ENCODE measurements at regions of chr4 and their contacts with region 1.

Region 1: GRCh38 chr4:100093091-100093866 is 97.0 kb downstream of the DDIT4L start:
- DNase-seq: peak; percentile 51 to 83
- ATAC-seq: peak; percentile 77 to 97 (median 89)
- H3K4me3 ChIP-seq: no peak overlapping the region
- H3K27ac ChIP-seq: peak overlapping the region in 6 of 10 donors; percentile 3 to 34 (median 16)
- H3K4me1 ChIP-seq: peaks cover 5 to 32% (median 14%) of the 10 kb centered on the region in 9 donors
- H3K27me3 ChIP-seq: no peaks in the 10 kb centered on the region
- CTCF ChIP-seq: peak; percentile 65 to 91 (median 85)

Region 2: GRCh38 chr4:99998062-99998867 is 95.0 kb before region 1 on chr4:
- intact Hi-C with region 1: loop called in 1 of 10 experiments (anchors 10 kb)
- DNase-seq: no peak
- ATAC-seq: no peak
- H3K4me3 ChIP-seq: no peak overlapping the region
- H3K27ac ChIP-seq: no peak overlapping the region
- H3K4me1 ChIP-seq: no peaks in the 10 kb centered on the region
- H3K27me3 ChIP-seq: no peaks in the 10 kb centered on the region
- CTCF ChIP-seq: peak in 7 of 9 donors; percentile 21 to 53 (median 37)

Region 3: DNA sequence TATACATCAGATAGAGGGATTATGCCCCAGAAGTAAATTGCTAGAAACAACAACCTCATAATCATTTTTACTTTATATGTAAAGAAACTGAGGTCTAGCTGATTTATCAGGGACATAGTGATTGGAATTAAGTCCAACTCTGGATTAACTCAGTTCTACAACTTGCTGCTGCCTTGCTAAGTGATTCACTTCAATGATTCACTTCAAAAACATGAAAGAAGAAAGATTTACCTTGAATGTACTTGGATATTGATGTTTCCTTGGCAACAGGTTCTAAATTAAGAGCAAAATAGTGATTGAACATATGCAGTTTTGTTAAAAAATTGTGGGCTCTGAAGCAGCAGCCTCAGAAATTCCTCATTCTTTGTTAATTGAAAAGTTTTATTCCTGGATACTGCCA is 43.4 kb before region 1 on chr4:
- intact Hi-C with region 1: no loop called
- DNase-seq: no peak
- ATAC-seq: no peak
- H3K4me3 ChIP-seq: no peak overlapping the region
- H3K27ac ChIP-seq: no peak overlapping the region
- H3K4me1 ChIP-seq: no peaks in the 10 kb centered on the region
- H3K27me3 ChIP-seq: no peaks in the 10 kb centered on the region
- CTCF ChIP-seq: no peak

Region 4: DNA sequence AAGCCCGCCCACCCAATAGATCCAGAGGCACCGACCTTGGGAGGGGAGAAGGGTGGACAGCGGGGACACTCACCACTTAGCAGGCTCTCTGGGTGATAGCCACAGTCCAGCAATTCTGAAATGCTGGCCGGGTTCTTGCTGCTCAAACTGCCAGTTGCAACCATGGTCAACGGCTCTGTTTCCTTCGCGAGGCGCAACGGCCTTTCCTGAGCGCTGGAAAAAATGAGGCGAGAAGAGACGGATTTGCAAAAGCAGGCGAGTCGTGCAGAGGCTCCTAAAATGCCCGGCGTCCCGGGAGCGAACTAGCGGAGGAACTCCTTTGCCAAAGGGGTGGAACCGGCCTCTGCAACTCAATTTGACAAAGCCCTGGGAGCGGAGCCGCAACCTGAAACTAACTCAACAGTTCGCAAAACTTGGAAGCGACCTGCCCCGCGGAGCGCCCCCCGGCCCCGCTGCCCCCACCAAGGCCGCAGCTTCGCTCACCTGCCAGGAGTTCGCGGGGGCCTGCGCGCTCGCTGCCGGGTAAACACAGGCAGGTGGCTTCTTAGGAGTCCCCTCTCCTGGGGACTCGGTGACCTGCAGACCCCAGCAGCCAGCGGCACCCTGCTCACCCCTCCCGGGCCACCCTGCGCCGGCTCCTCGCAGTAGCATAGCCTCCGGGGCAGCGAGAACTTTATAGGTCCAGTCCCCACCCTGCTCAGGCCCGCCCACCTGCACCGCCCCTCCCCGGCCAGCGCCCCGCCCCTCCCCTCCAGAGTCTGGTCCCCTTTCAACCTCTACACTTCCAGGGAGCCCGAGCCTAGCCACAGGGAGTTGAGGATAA is 96.8 kb after region 1 on chr4 and contains the start of gene DDIT4L:
- intact Hi-C with region 1: loop called in 1 of 10 experiments (anchors 5 kb)
- DNase-seq: peak; percentile 28 to 45
- ATAC-seq: peak; percentile 71 to 88 (median 85)
- H3K4me3 ChIP-seq: peak within 1 kb of the TSS; percentile 57 to 89 (median 74)
- H3K27ac ChIP-seq: peak within 1 kb of the TSS in 5 of 10 donors; percentile 1 to 59 (median 29)
- H3K4me1 ChIP-seq: peaks cover 0 to 23% (median 16%) of the 10 kb centered on the region in 9 donors
- H3K27me3 ChIP-seq: peaks cover 0 to 37% (median 4%) of the 10 kb centered on the region in 7 donors
- CTCF ChIP-seq: no peak
- total RNA-seq, gene DDIT4L: 0.14 to 2.1 (median 0.65) TPM

Region 5: DNA sequence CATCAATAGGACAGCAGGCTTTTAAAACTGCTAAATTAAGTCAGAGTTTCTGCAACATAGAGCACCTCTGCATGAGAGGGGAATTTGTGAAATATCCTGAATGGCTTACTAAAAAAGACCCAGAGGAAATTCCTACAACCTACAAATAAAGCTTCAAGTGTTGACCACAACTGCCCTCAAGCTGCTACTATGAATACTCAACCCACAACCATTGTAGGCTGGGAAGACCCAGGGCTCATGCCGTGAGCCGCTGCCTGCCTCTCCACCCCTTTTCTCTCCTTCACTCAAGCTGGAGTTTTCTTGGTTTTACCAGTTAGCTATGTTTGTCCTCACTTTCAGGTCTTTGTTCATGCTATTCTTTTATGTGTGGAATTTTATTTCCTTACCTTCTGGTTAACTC is 272.9 kb after region 1 on chr4:
- intact Hi-C with region 1: no loop called
- DNase-seq: no peak
- ATAC-seq: no peak
- H3K4me3 ChIP-seq: no peak overlapping the region
- H3K27ac ChIP-seq: no peak overlapping the region
- H3K4me1 ChIP-seq: no peaks in the 10 kb centered on the region
- H3K27me3 ChIP-seq: no peaks in the 10 kb centered on the region
- CTCF ChIP-seq: no peak

Region 6: DNA sequence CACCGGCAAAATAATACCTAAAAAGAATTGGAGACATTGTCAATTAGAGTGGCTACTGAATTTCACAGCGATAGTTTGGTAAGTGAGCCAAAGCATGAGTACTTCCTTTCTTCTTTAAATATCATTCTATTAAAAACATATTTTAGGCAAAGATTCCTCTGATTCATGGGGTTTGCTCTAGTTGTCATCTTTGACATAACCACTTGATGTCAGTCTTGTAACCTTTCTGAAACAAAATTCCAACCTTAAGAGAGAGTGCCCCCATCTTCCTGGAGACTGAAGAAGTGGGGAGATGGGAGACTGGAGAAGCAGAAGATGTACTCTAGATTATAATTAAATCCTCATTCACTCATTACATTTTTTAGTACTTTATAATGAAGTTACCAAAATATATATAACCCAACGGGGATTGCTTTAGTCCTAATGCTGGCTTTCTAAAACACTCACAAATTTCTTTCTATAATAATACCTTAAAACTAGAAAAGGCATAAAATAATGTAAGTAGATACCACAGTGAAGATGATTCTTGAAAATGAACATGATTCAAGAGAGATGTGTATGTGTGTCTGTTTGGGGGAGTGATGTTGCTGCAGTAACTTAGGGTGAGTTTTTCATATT is 328.2 kb after region 1 on chr4:
- intact Hi-C with region 1: loop called in 1 of 10 experiments (anchors 10 kb)
- DNase-seq: no peak
- ATAC-seq: peak in 6 of 8 donors; percentile 43 to 81 (median 58)
- H3K4me3 ChIP-seq: peak overlapping the region in 3 of 10 donors; percentile 9 to 21 (median 10)
- H3K27ac ChIP-seq: peak overlapping the region in 5 of 10 donors; percentile 6 to 56 (median 37)
- H3K4me1 ChIP-seq: peaks cover 0 to 37% (median 8%) of the 10 kb centered on the region in 9 donors
- H3K27me3 ChIP-seq: no peaks in the 10 kb centered on the region
- CTCF ChIP-seq: peak; percentile 18 to 77 (median 57)

Region 7: DNA sequence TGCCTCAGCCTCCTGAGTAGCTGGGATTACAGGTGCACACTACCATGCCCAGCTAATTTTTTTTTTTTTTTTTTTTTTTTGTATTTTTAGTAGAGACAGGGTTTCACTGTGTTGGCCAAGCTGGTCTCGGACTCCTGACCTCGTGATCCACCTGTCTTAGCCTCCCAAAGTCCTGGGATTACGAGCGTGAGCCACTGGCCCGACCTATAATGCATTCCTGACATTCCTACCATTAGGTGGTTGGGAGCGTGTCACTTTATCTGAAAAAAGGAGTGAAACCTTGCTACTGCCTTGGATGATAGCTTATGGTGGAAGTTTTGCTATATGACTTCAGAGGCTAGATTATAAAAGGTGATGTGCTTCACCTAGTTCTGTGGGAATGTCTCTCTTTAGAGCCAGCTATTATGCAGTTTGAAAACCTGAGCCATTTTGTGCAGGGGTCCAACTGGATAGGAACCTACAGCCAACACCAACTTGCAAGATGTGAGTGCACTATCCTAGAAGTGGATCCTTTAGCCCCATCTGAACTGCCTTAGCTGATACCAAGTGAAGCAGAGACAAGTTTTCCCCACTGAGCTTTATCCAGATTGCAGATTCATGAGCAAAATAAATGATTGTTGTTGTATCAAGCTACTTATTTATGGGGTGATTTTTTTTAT is 454.4 kb after region 1 on chr4:
- intact Hi-C with region 1: no loop called
- DNase-seq: no peak
- ATAC-seq: no peak
- H3K4me3 ChIP-seq: no peak overlapping the region
- H3K27ac ChIP-seq: no peak overlapping the region
- H3K4me1 ChIP-seq: no peaks in the 10 kb centered on the region
- H3K27me3 ChIP-seq: no peaks in the 10 kb centered on the region
- CTCF ChIP-seq: no peak

Region 8: GRCh38 chr4:101724093-101724492 is 1630.8 kb after region 1 on chr4:
- intact Hi-C with region 1: loop called in 1 of 10 experiments (anchors 5 kb)
- DNase-seq: no peak
- ATAC-seq: peak in 1 of 8 donors; percentile 25
- H3K4me3 ChIP-seq: no peak overlapping the region
- H3K27ac ChIP-seq: no peak overlapping the region
- H3K4me1 ChIP-seq: no peaks in the 10 kb centered on the region
- H3K27me3 ChIP-seq: no peaks in the 10 kb centered on the region
- CTCF ChIP-seq: no peak

Region 9: DNA sequence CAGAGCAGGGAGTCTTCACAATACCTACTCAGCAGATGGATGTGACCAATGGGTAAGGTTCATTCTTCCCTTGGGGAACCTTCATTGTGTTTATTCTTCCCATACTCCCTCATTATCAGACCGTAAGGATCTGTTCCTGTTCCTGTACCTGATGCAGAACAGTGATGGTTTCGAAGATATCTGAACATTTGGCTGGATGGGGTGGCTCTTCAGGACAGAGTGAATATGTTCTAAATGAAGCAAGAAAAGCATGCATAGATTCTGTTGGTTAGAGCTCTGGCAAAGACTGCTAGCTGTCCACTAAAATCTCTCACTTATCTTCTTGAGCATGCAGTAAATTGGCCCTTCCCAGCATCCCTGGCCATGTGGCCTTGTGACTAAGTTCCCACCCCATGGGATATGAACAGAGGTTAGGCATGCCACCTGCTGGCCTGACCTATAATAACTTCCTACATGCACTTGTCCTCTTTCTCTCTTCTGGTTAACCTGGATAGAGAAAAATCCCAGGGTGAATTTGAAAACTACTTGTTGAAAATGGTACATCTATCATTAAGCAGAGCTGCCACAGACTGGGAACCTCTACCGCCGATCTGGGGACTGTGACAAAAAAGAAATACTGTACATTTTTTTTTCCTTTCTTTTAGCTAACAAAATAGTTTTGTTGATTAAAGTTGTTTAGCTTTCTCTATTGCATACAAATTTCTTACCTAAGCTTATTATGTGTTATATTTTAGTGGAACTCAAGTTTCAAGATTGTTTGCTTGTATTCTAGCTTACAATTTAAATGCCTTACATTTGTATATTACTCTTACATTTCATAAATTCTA is 1637.2 kb after region 1 on chr4:
- intact Hi-C with region 1: loop called in 3 of 10 experiments (anchors 2 to 10 kb)
- DNase-seq: peak; percentile 19 to 66
- ATAC-seq: peak; percentile 68 to 94 (median 80)
- H3K4me3 ChIP-seq: no peak overlapping the region
- H3K27ac ChIP-seq: no peak overlapping the region
- H3K4me1 ChIP-seq: no peaks in the 10 kb centered on the region
- H3K27me3 ChIP-seq: no peaks in the 10 kb centered on the region
- CTCF ChIP-seq: peak; percentile 38 to 80 (median 75)